Calu3 (cell line): ENCODE measurements at regions of chr2 and their contacts with region 1.

Region 1: DNA sequence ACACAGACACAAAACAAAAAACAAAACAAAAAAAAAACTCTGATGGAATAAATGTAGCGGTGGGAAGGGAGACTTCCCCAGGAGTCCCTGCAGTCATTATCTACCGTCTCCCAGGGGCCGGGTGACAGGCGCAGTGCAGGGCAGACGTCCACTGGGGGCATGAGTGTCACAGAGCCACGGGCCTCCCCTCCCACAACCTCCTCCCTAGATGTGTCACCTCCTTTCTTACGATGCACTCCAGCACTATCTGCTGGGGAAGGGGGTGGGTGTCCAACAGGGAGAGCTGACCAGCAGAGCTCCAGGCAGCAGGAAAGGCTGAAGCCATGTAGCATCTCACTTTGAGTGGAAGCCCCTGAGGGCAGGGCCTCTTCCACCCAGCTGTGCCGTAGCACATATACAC is 84.5 kb downstream of the LONRF2 start:
- DNase-seq: no peak
- H3K4me3 Mint-ChIP-seq: no peak overlapping the region
- H3K27ac Mint-ChIP-seq: no peak overlapping the region
- H3K4me1 Mint-ChIP-seq: no peaks in the 10 kb centered on the region
- H3K27me3 Mint-ChIP-seq: peaks cover 77% of the 10 kb centered on the region
- CTCF ChIP-seq: no peak

Region 2: DNA sequence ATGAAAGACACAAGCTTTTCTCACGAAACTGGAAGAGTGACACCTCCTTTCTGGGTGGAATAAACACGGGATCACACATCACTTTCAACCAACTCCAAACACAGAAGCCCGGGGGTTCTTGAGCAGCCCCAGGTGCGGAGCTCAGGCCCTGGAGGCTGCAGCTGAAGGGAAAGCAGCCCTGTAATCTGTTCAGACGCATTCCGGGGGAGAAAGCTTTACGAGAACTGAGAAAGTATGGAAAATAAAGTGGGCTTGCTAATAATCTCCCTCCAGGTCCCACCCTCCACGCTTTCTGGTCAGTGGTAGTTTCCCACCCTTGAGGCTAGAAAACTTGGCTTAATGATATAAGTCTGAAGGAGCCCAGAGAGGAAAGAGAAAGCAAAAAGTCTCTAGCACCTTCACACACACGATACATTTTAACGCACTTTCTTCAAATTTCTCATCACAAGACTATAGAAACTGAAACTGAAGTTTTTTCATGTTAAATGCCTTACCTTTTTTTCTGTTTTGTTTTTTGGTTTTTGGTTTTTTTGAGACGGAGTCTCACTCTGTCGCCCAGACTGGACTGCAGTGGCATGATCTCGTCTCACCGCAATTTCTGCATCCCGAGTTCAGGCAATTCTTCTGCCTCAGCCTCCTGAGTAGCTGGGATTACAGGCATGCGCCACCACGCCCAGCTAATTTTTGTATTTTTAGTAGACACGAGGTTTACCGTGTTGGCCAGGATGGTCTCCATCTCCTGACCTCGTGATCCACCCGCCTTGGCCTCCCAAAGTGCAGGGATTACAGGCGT is 236.7 kb before region 1 on chr2:
- CTCF ChIA-PET with region 1: no interaction called
- intact Hi-C with region 1: no loop called
- DNase-seq: no peak
- H3K4me3 Mint-ChIP-seq: no peak overlapping the region
- H3K27ac Mint-ChIP-seq: no peak overlapping the region
- H3K4me1 Mint-ChIP-seq: no peaks in the 10 kb centered on the region
- H3K27me3 Mint-ChIP-seq: peaks cover 47% of the 10 kb centered on the region
- CTCF ChIP-seq: no peak

Region 3: GRCh38 chr2:100182494-100183361 is 55.0 kb before region 1 on chr2:
- CTCF ChIA-PET with region 1: no interaction called
- intact Hi-C with region 1: loop called (anchors 2 kb)
- DNase-seq: no peak
- H3K4me3 Mint-ChIP-seq: no peak overlapping the region
- H3K27ac Mint-ChIP-seq: no peak overlapping the region
- H3K4me1 Mint-ChIP-seq: no peaks in the 10 kb centered on the region
- H3K27me3 Mint-ChIP-seq: peaks cover 66% of the 10 kb centered on the region
- CTCF ChIP-seq: no peak

Region 4: GRCh38 chr2:100214265-100214971 is 23.4 kb before region 1 on chr2:
- CTCF ChIA-PET with region 1: no interaction called
- intact Hi-C with region 1: no loop called
- DNase-seq: no peak
- H3K4me3 Mint-ChIP-seq: no peak overlapping the region
- H3K27ac Mint-ChIP-seq: no peak overlapping the region
- H3K4me1 Mint-ChIP-seq: no peaks in the 10 kb centered on the region
- H3K27me3 Mint-ChIP-seq: peaks cover 93% of the 10 kb centered on the region
- CTCF ChIP-seq: no peak